HepG2 (cell line): ENCODE measurements at regions of chr21 and their contacts with region 1.

Region 1: DNA sequence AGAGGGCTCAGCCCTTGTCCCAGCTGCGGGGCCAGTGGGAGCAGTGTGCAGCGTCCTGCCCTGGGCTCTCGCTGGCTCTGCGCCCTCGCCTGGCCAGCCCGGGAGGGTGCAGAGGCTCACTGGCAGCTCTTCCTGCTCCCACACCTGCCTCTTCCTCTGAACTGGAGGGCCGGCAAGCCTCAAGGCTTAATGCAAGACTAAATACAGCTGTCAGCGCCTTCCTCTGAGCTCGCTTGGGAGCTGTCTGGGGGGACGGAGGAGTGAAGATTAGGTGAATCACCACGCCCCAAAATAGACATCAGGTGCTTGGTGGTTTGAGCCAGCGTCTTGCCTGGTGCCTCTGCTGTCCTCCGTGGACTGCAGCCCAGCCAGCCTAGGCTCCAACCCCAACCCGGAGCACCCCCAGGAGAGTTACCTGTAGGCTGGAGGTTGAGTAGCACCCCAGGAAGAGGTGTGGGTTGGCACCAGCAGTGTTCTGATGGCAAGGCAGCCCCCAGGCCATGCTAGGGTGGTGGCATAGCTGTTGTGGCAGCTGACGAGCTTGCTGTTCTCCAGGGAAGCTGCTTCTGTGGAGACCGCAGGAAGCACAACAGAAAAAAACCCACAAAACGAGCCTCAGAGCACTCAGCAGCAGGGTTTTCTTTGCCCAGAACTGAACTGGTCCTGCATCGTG is 36.9 kb downstream of the UMODL1 start:
- DNase-seq: peak; percentile 34
- ATAC-seq: peak; percentile 97
- H3K4me3 ChIP-seq: no peak overlapping the region
- H3K27ac ChIP-seq: no peak overlapping the region
- H3K4me1 ChIP-seq: peaks cover 9% of the 10 kb centered on the region
- H3K27me3 ChIP-seq: peaks cover 0 to 54% of the 10 kb centered on the region in 2 experiments; a peak in 3 of 5 replicates
- CTCF ChIP-seq: peak; percentile 91
- EP300 ChIP-seq: no peak
- POLR2A ChIP-seq: no peak
- RAD21 ChIP-seq: peak; percentile 72

Region 2: DNA sequence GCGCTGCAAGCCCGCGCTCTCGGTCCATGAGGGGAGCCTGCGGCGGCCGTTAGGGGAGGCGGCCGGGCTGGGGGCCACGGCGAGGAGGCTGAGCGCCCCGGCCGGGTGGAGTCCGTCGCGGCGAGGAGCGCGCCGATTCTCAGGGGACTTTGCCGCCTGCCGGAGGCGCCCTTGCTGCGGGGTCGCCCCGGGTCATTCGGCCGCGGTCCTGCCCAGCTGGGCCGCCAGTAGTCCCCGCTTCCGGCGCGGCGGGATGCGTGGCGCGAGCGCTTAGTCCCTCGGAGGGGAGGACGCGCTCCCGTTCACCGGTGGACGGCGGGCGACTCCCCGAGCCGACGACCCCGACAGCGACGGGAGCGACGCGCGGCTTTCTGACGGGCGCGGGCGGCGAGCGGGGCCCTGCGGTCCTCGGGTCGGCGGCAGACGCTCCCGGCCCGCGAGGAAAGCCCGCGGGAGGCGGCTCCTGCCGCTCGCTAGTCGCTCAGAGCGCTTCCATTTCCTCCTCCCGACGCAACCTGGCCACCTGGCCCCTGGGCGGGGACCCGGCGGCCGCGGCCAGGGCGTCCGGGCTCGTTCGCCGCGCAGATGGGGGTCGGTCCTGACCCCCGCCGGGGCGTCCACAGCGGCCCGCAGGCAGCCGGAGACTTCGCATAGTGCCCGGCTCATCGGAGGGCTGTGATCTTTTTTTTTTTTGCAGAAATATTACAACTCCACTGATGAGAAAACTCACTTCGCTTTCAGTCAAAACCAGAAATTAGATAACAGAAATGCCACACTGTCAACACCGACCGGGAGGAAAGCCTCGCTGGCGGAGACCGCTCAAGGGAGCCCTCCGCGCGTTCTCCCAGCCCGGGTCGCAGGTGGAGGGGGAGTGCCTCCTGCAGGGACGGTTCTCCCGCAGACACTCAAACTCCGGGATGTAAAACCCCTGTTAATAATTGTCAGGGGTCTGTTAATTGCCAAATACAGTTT is 97.2 kb before region 1 on chr21:
- CTCF ChIA-PET with region 1: no interaction called
- POLR2A ChIA-PET with region 1: no interaction called
- in situ Hi-C with region 1: no loop called
- intact Hi-C with region 1: loop called (anchors 1 kb)
- DNase-seq: peak; percentile 20
- ATAC-seq: peak; percentile 43
- H3K4me3 ChIP-seq: peak overlapping the region; percentile 71 to 91 (median 74)
- H3K27ac ChIP-seq: peak overlapping the region; percentile 98
- H3K4me1 ChIP-seq: peaks cover 33% of the 10 kb centered on the region
- H3K27me3 ChIP-seq: no peaks in the 10 kb centered on the region; a peak in 1 of 5 replicates
- CTCF ChIP-seq: peak; percentile 37
- EP300 ChIP-seq: no peak
- POLR2A ChIP-seq: peak in 1 of 2 experiments; percentile 84; a peak in 3 of 4 replicates
- RAD21 ChIP-seq: peak; percentile 58